MCF 10A (cell line): ENCODE measurements at regions of chr6 and their contacts with region 1.

Region 1: DNA sequence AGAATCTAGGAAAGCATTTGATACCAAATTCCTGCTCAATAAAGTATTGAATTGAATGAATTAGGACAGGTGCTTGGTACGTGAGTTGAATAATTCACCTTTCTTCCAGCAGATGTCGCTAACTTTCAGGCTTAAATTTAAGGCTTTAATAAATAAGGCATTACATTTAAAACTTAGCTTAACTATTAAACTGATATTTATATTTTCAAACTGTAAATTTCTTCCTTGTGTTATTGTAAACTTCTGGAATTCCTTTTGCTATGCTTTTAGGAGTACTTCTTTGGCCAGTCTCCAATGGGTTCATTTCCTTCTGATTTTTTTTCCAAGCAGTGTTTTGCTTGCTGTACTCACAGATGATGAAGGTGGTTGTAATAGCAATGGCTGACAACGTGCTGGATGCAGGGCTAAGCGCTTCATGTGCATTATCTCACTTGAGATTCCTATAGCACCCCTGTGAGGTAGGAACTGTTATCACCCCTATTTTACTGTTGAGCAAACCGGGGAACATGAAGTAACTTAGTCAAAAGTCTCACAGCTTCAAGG is 71.3 kb upstream of the SLC2A12 start:
- DNase-seq: peak; percentile 75
- H3K4me3 Mint-ChIP-seq: no peak overlapping the region
- H3K27ac Mint-ChIP-seq: no peak overlapping the region
- H3K4me1 Mint-ChIP-seq: peaks cover 5% of the 10 kb centered on the region
- H3K27me3 Mint-ChIP-seq: no peaks in the 10 kb centered on the region
- CTCF ChIP-seq: peak; percentile 35

Region 2: DNA sequence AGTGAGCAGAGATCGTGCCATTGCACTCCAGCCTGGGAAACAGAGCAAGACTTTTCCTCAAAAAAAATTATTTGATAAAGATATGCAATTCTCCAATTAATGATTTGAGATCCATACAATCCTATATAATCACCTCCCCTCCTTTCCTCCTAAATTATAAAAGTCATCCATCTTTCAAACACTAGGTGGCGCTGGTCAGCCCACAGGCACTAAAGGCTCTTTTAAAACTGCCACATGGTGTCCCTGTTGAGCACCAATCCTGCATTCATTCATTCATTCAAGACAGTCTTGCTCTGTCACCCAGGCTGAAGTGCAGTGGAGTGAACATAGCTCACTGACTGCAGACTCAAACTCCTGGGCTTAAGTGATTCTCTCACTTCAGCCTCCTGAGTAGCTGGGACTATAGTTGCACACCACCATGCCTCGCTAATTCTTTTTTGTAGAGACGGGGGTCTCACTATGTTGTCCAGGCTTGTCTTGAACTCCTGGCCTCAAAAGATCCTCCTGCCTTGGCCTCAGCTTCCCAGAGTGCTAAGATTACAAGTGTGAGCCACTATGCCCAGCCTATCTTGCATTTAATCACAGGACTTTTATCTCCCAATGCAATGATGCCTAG is 12.6 kb before region 1 on chr6:
- CTCF ChIA-PET with region 1: interaction called, 98 read pairs
- POLR2A ChIA-PET with region 1: interaction called, 4 read pairs
- intact Hi-C with region 1: loop called (anchors 2 kb)
- DNase-seq: peak; percentile 67
- H3K4me3 Mint-ChIP-seq: no peak overlapping the region
- H3K27ac Mint-ChIP-seq: no peak overlapping the region
- H3K4me1 Mint-ChIP-seq: peaks cover 19% of the 10 kb centered on the region
- H3K27me3 Mint-ChIP-seq: no peaks in the 10 kb centered on the region
- CTCF ChIP-seq: peak; percentile 76

Region 3: GRCh38 chr6:134138226-134138975 is 14.7 kb after region 1 on chr6:
- CTCF ChIA-PET with region 1: interaction called, 18 read pairs
- POLR2A ChIA-PET with region 1: interaction called, 8 read pairs
- intact Hi-C with region 1: no loop called
- DNase-seq: no peak
- H3K4me3 Mint-ChIP-seq: no peak overlapping the region
- H3K27ac Mint-ChIP-seq: no peak overlapping the region
- H3K4me1 Mint-ChIP-seq: no peaks in the 10 kb centered on the region
- H3K27me3 Mint-ChIP-seq: no peaks in the 10 kb centered on the region
- CTCF ChIP-seq: no peak

Region 4: DNA sequence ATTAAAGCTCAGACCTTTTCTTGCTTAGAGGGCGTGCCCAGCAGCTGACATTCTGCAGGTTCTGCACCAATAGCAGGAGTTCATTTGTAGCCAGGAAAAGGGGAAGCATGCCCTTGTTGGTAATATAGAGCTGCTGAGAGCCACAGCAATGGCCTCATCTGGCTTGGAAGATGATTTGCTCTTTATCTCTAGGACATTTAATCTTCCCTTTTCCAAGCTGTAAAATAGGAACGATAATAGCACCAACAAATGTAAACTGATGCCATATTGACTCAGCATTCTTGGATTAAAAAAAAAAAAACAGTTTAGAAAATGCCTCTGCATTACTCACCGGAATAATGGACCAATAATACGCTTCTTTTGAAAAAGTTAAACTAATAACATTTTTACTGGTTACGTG is 22.0 kb after region 1 on chr6:
- CTCF ChIA-PET with region 1: interaction called, 13 read pairs
- POLR2A ChIA-PET with region 1: interaction called, 6 read pairs
- intact Hi-C with region 1: no loop called
- DNase-seq: no peak
- H3K4me3 Mint-ChIP-seq: no peak overlapping the region
- H3K27ac Mint-ChIP-seq: no peak overlapping the region
- H3K4me1 Mint-ChIP-seq: no peaks in the 10 kb centered on the region
- H3K27me3 Mint-ChIP-seq: no peaks in the 10 kb centered on the region
- CTCF ChIP-seq: no peak

Region 5: GRCh38 chr6:134161036-134161435 is 37.3 kb after region 1 on chr6:
- CTCF ChIA-PET with region 1: interaction called, 17 read pairs
- POLR2A ChIA-PET with region 1: interaction called, 5 read pairs
- intact Hi-C with region 1: no loop called
- DNase-seq: peak; percentile 46
- H3K4me3 Mint-ChIP-seq: no peak overlapping the region
- H3K27ac Mint-ChIP-seq: no peak overlapping the region
- H3K4me1 Mint-ChIP-seq: peaks cover 6% of the 10 kb centered on the region
- H3K27me3 Mint-ChIP-seq: no peaks in the 10 kb centered on the region
- CTCF ChIP-seq: no peak

Region 6: DNA sequence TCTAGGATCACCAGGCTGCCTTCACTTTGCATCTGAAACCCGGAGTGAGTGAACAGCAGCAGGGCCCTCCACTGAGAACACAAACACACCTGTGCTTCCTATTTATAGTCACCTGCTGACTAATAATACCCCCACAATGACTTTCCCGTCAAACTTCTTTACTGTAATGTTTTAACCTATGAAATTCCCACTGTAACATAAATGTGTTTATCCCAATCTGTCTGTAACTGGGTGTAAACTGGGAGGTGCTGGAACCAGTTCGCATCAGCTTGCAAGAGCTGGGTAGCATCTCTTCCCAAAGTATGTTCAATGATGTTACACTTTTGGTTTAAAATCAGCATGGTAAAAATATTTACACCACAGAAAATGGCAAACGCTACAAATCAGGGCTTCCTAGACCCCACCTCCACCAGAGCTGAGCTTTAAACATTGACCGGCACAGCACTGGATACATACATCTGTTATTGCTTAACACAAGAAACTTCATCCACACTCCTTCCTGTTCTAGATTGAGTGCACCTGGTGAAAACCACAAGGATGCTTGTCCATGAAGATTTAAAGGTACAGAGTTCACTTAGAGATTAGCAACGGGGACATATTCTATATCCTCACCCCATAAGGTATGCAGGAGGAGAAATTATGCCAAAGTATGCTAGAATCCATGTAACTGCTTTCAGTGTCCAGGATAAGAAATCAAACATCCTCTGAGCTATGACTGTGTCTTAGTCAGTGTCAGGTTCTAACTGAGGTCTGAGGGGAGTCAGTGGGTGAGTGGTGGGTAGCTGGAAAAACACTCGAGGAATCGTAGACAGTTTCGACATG is 747.2 kb after region 1 on chr6:
- CTCF ChIA-PET with region 1: interaction called, 10 read pairs
- POLR2A ChIA-PET with region 1: no interaction called
- intact Hi-C with region 1: no loop called
- DNase-seq: peak; percentile 77
- H3K4me3 Mint-ChIP-seq: no peak overlapping the region
- H3K27ac Mint-ChIP-seq: no peak overlapping the region
- H3K4me1 Mint-ChIP-seq: peaks cover 10% of the 10 kb centered on the region
- H3K27me3 Mint-ChIP-seq: no peaks in the 10 kb centered on the region
- CTCF ChIP-seq: no peak

Region 7: GRCh38 chr6:134882426-134883038 is 758.8 kb after region 1 on chr6:
- CTCF ChIA-PET with region 1: interaction called, 29 read pairs
- POLR2A ChIA-PET with region 1: interaction called, 3 read pairs
- intact Hi-C with region 1: no loop called
- DNase-seq: peak; percentile 82
- H3K4me3 Mint-ChIP-seq: no peak overlapping the region
- H3K27ac Mint-ChIP-seq: no peak overlapping the region
- H3K4me1 Mint-ChIP-seq: peaks cover 16% of the 10 kb centered on the region
- H3K27me3 Mint-ChIP-seq: no peaks in the 10 kb centered on the region
- CTCF ChIP-seq: peak; percentile 94